ENCODE measurements at regions of chr22 and their contacts with region 1.

Region 1: GRCh38 chr22:28882878-28883656 is at the start of gene ZNRF3:
- DNase-seq: peak; percentile 98
- total RNA-seq, gene ZNRF3: 7.5 to 8.5 TPM

Region 2: DNA sequence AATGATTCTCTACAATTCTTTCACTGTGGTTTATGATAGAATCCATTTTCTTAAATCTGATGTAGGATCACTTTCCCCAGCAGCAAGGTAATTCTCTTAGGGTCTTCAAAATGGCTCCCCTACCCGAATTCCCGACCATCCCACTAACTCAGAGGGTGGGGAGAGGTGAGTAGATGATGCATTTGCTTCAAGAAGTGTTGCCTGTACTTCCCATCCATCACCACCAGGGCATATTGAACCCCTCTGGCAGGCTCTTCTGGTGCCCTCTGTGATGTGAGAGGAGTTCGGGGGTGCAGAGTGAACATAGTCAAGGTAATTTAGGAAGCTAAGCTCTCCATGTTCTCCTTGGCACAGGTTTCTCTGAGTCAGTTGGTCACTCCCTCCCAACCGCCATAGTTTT is 52.6 kb after region 1 on chr22:
- intact Hi-C with region 1: no loop called
- DNase-seq: no peak

Region 3: DNA sequence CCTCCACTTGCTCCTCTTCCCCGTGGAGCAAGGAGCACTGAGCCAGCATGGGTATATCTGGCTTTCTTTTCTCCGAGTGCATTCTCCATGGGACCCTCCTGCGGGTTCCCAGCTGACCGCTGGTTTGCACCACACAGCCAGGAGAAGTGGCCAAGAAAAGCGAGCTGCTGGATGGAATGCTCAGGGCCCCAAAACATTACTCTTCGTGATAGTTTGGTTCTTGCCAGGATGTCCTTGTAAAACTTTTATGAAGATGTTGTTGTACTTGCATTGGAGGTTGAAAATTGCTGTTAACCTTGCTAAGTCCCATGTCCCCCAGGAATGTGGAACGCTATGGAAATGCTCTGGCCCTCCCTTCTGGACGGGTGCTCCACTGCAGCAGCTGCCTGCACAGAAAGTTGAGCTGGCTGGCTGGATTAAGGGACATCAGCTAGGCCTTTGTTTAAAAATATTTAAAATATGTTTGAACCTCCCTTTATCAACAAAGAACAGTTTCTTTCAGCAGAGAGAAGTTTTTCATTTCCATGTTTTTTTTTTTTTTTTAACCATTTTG is 69.0 kb after region 1 on chr22:
- intact Hi-C with region 1: loop called in 1 of 2 experiments (anchors 10 kb)
- DNase-seq: no peak

Measured in posterior vena cava (tissue), 2 donors.